Activated CD4-positive, alpha-beta T cell treated with anti-CD3 and anti-CD28 coated beads, Interleukin-2, amount 10 ng/mL, durations not matched to agents 24 days and 14 days (primary cell): ENCODE measurements at regions of chr12 and their contacts with region 1.

Region 1: GRCh38 chr12:9797722-9798619 is 29.3 kb upstream of the KLRF1 start:
- DNase-seq: peak; percentile 92
- H3K4me3 Mint-ChIP-seq: peak overlapping the region; percentile 81
- H3K27ac Mint-ChIP-seq: peak overlapping the region; percentile 78
- H3K4me1 Mint-ChIP-seq: peaks cover 43% of the 10 kb centered on the region
- H3K27me3 Mint-ChIP-seq: peaks cover 8% of the 10 kb centered on the region

Region 2: DNA sequence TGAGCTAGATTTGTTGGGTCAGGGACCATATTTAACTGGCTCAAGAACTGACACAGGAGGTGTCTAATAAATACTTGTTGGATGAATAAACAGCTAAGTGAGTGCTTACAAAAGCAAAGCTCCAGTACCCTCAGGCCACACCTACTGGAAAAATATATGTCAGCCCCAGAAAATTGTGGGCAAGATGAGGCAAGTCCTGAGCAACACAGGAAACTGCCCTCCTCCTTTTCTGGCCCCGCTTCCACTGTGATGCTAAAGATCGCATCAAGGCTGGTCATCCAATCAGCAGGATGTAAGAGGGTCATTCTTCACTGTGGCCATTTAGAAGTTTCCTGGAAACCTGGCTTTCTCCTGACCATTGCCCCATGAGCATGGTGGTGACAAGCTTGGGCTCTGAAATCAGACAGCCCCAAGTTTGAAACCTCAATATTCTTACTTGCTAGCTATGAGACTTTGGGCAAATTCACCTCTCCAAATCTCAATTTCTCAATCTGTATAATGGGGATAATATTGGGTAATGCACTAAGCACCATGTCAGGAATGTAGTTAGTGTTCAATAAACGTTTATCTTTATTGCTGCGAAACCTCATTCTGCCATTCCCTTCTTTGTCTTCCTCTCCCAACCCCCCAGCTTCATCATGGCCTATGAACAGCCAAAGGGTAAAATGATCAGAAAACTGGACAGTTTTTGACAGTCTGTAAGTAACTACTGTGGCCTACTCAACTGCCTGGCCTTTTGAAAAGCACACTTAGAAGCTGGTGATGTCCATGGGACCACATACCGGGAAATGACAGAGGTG is 450.4 kb before region 1 on chr12:
- intact Hi-C with region 1: no loop called
- DNase-seq: no peak
- H3K4me3 Mint-ChIP-seq: no peak overlapping the region
- H3K27ac Mint-ChIP-seq: no peak overlapping the region
- H3K4me1 Mint-ChIP-seq: peaks cover 7% of the 10 kb centered on the region
- H3K27me3 Mint-ChIP-seq: no peaks in the 10 kb centered on the region

Region 3: GRCh38 chr12:9750276-9751203 is 47.4 kb before region 1 on chr12:
- intact Hi-C with region 1: loop called (anchors 1 kb)
- DNase-seq: peak; percentile 89
- H3K4me3 Mint-ChIP-seq: peak overlapping the region; percentile 55
- H3K27ac Mint-ChIP-seq: peak overlapping the region; percentile 70
- H3K4me1 Mint-ChIP-seq: peaks cover 46% of the 10 kb centered on the region
- H3K27me3 Mint-ChIP-seq: no peaks in the 10 kb centered on the region

Region 4: DNA sequence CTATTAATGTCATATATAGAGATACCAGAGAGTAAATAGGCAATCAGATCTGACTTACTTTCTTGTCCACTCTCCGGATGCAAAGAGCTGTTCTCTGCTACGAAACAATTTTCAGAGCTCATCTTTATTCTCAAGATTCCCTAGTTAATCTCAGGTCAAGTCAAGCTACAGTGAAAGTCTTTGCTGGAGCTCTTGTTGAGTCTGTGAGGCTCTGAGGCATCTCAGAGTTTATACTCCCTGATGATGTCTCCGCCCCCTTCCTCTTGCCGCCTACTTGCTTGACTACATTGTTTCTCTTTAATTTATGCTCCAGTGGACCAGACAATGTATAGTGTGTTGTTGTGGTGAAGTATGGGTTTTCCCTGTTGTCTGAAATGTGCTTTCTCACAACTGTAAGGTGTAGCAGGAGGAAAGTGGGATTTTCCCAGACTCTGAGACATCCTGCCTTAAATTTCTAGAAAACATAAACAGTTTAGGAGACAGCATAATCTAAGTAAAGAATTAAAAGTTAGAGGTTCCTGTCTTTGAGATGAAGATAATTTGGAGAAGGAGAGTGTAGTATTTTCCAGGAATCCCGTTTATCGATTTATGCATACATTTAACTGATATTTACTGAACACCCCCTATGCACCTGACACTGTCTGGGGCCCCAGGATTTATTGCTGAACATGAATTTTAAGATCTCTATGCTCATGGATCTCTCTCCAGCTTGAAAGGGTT is 37.1 kb before region 1 on chr12 and contains the start of gene CD69:
- intact Hi-C with region 1: loop called (anchors 1 kb)
- DNase-seq: peak; percentile 96
- H3K4me3 Mint-ChIP-seq: peak within 1 kb of the TSS; percentile 94
- H3K27ac Mint-ChIP-seq: peak within 1 kb of the TSS; percentile 98
- H3K4me1 Mint-ChIP-seq: peaks cover 48% of the 10 kb centered on the region
- H3K27me3 Mint-ChIP-seq: peaks cover 5% of the 10 kb centered on the region
- total RNA-seq, gene CD69: 106 and 111 TPM in 2 replicates

Region 5: GRCh38 chr12:9773216-9773877 is 24.6 kb before region 1 on chr12:
- intact Hi-C with region 1: loop called (anchors 1 kb)
- DNase-seq: no peak
- H3K4me3 Mint-ChIP-seq: peak overlapping the region; percentile 60
- H3K27ac Mint-ChIP-seq: peak overlapping the region; percentile 74
- H3K4me1 Mint-ChIP-seq: peaks cover 76% of the 10 kb centered on the region
- H3K27me3 Mint-ChIP-seq: no peaks in the 10 kb centered on the region

Region 6: GRCh38 chr12:10140001-10140400 is 342.0 kb after region 1 on chr12:
- intact Hi-C with region 1: loop called (anchors 5 kb)
- DNase-seq: peak; percentile 82
- H3K4me3 Mint-ChIP-seq: no peak overlapping the region
- H3K27ac Mint-ChIP-seq: no peak overlapping the region
- H3K4me1 Mint-ChIP-seq: no peaks in the 10 kb centered on the region
- H3K27me3 Mint-ChIP-seq: peaks cover 38% of the 10 kb centered on the region